ENCODE measurements at regions of chr6 and their contacts with region 1.

Region 1: DNA sequence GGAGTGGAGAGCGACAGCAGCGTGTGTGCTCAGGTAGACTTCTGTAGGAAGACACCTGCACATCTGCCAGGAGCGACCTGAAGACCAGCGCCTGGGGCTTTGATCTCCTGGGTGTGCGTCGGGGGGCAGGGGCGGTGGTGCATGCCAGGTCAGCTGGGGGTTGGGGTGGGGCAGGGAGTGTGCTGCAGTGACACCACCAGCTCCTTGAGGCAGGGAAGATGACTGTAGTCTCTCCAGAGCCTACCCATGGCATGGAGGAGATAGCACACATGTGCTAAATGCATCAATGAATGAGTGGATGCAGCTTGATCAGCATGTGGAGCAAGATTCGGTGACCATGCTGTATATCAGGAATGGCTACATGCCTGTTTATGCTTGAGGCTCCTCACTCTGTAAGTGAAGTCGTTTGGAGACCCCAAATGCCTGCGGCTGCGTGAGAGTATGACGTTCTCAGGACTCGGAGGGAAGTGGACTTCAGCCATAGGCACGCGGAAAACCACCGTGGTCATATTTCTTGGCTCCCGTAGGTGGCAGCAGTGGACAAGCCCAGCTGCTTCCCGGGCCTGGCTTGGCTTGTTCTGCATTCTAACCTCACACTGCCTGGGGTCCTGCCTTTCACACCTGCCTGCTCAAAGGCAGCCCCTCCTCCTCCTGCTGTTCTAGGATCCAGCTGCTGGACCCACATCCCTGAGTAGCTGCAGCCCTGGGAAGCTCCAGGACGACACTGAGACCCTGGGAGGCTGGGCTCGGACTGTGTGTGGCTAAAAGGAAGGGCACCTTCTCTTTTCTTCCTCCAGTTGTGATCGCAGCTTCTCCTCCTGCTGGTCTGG is 39.4 kb upstream of the KCNK16 start:
- DNase-seq: peak; percentile 81
- CTCF ChIP-seq: peak; percentile 80

Region 2: GRCh38 chr6:39228992-39229767 is 132.7 kb before region 1 on chr6 and contains the start of gene KCNK5:
- CTCF ChIA-PET with region 1: no interaction called
- POLR2A ChIA-PET with region 1: no interaction called
- DNase-seq: peak; percentile 83
- CTCF ChIP-seq: peak; percentile 42

Region 3: DNA sequence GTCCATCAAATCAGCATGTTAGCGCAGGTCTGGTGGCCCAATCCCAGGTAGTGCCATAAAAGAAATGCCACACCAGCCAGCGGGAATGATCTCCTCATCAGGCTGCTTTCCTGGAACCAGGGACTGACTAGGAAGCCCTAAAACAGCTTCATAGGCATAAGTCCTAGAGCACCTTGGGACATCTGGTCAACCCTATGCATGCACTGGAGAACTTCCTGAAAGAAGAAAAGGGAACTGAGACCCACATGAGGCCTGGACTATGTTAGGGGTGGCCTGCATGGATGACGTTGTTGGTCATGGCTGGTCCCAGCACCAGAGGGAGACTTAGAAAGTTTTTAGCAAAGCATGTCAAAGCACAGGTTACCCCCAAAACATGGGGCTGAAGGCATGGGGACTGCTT is 31.8 kb before region 1 on chr6:
- CTCF ChIA-PET with region 1: no interaction called
- POLR2A ChIA-PET with region 1: no interaction called
- DNase-seq: peak; percentile 67
- CTCF ChIP-seq: no peak

Region 4: GRCh38 chr6:39342692-39343395 is 19.0 kb before region 1 on chr6:
- CTCF ChIA-PET with region 1: interaction called, 13 read pairs
- POLR2A ChIA-PET with region 1: no interaction called
- DNase-seq: peak; percentile 42
- CTCF ChIP-seq: no peak

Region 5: GRCh38 chr6:39347906-39348585 is 13.8 kb before region 1 on chr6:
- CTCF ChIA-PET with region 1: interaction called, 11 read pairs
- POLR2A ChIA-PET with region 1: no interaction called
- DNase-seq: peak; percentile 82
- CTCF ChIP-seq: peak; percentile 88

Region 6: GRCh38 chr6:39440039-39440426 is 78.2 kb after region 1 on chr6:
- CTCF ChIA-PET with region 1: no interaction called
- POLR2A ChIA-PET with region 1: no interaction called
- DNase-seq: no peak
- CTCF ChIP-seq: no peak

Region 7: DNA sequence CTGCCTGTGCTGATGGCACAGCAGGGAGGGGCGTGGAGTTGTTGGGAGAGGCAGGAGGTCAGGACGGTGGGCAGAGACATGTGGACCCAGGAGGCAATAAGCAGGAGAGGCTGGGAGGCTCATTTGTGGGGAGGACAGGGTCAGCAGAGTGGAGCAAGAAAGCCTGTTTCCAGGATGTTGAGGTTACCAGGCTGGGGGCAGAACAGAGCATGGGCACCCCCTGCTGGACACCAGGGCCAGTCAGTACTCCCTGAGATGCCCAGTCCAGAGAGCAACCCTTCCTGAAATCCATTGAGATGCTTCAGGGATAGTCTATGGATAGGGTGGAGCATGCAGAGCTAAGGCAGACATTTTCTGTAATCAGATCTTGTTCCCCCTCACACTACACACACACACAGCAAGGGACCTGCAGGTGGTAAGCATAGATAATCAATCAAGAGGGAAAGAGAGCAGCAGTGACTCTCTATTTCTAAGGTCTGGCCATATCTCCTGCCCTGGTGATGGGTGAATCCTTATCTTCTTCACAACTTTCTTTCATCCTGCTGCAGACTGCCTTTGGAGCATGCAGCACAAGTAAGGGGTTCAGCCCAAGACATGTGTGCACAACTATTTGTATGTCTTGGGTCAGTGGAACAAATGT is 530.7 kb after region 1 on chr6:
- CTCF ChIA-PET with region 1: interaction called, 18 read pairs
- POLR2A ChIA-PET with region 1: no interaction called
- DNase-seq: peak; percentile 58
- CTCF ChIP-seq: peak; percentile 56

Measured in GM10248 (cell line).